ENCODE measurements at regions of chr5 and their contacts with region 1.

Region 1: GRCh38 chr5:62386824-62387223 is 16.9 kb downstream of the DIMT1 start:
- DNase-seq: no peak
- H3K4me3 Mint-ChIP-seq: no peak overlapping the region
- H3K27ac Mint-ChIP-seq: peak overlapping the region; percentile 6
- H3K4me1 Mint-ChIP-seq: peaks cover 6% of the 10 kb centered on the region
- H3K27me3 Mint-ChIP-seq: no peaks in the 10 kb centered on the region

Region 2: DNA sequence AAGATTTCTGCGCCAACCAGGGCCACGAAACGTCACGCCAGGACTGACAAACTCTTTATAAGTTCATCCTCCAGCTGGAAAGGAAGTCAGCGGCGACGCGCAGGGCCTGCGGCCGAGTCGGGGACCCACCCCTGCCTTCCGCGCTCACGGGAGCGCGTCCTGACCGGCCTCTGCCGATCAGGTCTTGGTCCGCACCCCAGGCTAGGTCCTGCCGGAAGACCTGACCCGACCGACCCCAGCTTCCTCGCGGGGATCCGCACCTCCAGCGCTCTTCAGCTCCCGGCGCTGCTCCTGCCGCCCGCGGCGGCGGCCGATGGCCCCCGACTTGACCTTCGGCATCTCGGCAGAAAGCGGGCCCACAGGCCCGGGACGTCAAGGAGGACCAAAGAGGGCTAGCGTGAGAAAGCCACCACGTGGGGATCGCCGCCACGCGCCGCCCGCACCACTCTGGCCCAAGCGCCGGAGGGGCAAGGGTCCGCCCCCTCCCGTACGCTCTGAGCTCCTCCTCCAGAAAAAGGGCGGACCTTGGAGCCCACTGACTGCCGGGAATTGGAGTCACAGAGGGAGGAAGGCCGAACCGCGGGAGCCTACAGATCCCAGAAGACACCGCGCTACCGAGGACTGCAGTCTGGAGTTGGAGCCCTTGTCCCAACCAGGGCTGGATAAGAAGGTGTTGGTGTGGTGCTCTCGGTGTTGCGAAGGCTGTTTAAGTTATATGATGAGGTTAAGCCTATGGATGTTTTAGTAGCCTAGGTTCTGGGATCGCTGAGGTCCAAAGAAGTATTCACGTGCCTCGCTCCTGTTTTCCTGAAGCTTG is 16.8 kb after region 1 on chr5 and contains the start of gene DIMT1:
- CTCF ChIA-PET with region 1: interaction called, 5 read pairs
- POLR2A ChIA-PET with region 1: interaction called, 42 read pairs
- DNase-seq: peak; percentile 96
- H3K4me3 Mint-ChIP-seq: peak within 1 kb of the TSS; percentile 98
- H3K27ac Mint-ChIP-seq: peak within 1 kb of the TSS; percentile 88
- H3K4me1 Mint-ChIP-seq: peaks cover 33% of the 10 kb centered on the region
- H3K27me3 Mint-ChIP-seq: no peaks in the 10 kb centered on the region
- total RNA-seq, gene DIMT1: 28.9 to 33.6 TPM